ENCODE measurements at regions of chr4 and their contacts with region 1.

Region 1: GRCh38 chr4:142372530-142373260 is 473.4 kb downstream of the INPP4B start:
- DNase-seq: no peak
- ATAC-seq: peak; percentile 6
- H3K4me3 ChIP-seq: no peak overlapping the region
- H3K27ac ChIP-seq: no peak overlapping the region
- H3K4me1 ChIP-seq: no peaks in the 10 kb centered on the region
- H3K27me3 ChIP-seq: no peaks in the 10 kb centered on the region
- CTCF ChIP-seq: no peak
- EP300 ChIP-seq: no peak
- POLR2A ChIP-seq: no peak
- RAD21 ChIP-seq: no peak

Region 2: GRCh38 chr4:142314686-142315085 is 58.0 kb before region 1 on chr4:
- CTCF ChIA-PET with region 1: no interaction called
- POLR2A ChIA-PET with region 1: no interaction called
- RAD21 ChIA-PET with region 1: no interaction called
- SMC1A ChIA-PET with region 1: no interaction called
- in situ Hi-C with region 1: no loop called
- intact Hi-C with region 1: no loop called
- DNase-seq: no peak
- ATAC-seq: no peak
- H3K4me3 ChIP-seq: no peak overlapping the region
- H3K27ac ChIP-seq: no peak overlapping the region
- H3K4me1 ChIP-seq: no peaks in the 10 kb centered on the region
- H3K27me3 ChIP-seq: no peaks in the 10 kb centered on the region
- CTCF ChIP-seq: no peak
- EP300 ChIP-seq: no peak
- POLR2A ChIP-seq: no peak
- RAD21 ChIP-seq: no peak

Region 3: GRCh38 chr4:142347241-142347640 is 25.5 kb before region 1 on chr4:
- CTCF ChIA-PET with region 1: interaction called, 68 read pairs
- POLR2A ChIA-PET with region 1: interaction called, 5 read pairs
- RAD21 ChIA-PET with region 1: interaction called, 18 read pairs
- SMC1A ChIA-PET with region 1: interaction called, 76 read pairs
- in situ Hi-C with region 1: no loop called
- intact Hi-C with region 1: no loop called
- DNase-seq: no peak
- ATAC-seq: no peak
- H3K4me3 ChIP-seq: no peak overlapping the region
- H3K27ac ChIP-seq: no peak overlapping the region
- H3K4me1 ChIP-seq: no peaks in the 10 kb centered on the region
- H3K27me3 ChIP-seq: no peaks in the 10 kb centered on the region
- CTCF ChIP-seq: no peak
- EP300 ChIP-seq: no peak
- POLR2A ChIP-seq: no peak
- RAD21 ChIP-seq: no peak

Region 4: DNA sequence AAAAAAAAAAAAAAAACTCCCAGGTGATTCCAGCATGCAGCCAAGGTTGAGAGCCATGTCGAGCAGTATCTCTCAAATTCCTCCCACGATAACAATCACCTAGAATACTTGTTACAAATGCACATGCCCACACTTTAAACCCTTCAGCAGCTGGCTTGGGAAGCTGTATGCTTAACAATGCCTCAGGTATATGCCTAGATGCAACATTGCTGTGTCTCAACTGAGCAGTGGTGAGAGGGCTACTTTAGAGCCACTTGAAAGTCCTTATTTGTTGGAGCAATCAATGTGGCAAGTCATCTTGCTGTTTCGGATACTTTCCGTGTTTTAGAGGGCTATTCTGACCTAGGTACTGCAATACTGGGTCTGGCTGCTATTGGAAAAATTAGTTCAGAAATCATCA is 14.0 kb before region 1 on chr4:
- CTCF ChIA-PET with region 1: interaction called, 68 read pairs
- POLR2A ChIA-PET with region 1: interaction called, 4 read pairs
- RAD21 ChIA-PET with region 1: interaction called, 18 read pairs
- SMC1A ChIA-PET with region 1: interaction called, 76 read pairs
- in situ Hi-C with region 1: no loop called
- intact Hi-C with region 1: no loop called
- DNase-seq: no peak
- ATAC-seq: peak; percentile 45
- H3K4me3 ChIP-seq: no peak overlapping the region
- H3K27ac ChIP-seq: no peak overlapping the region
- H3K4me1 ChIP-seq: no peaks in the 10 kb centered on the region
- H3K27me3 ChIP-seq: no peaks in the 10 kb centered on the region
- CTCF ChIP-seq: no peak
- EP300 ChIP-seq: no peak
- POLR2A ChIP-seq: no peak
- RAD21 ChIP-seq: no peak

Region 5: GRCh38 chr4:142386449-142386848 is 13.8 kb after region 1 on chr4:
- CTCF ChIA-PET with region 1: interaction called, 16 read pairs
- POLR2A ChIA-PET with region 1: interaction called, 12 read pairs
- RAD21 ChIA-PET with region 1: interaction called, 8 read pairs
- SMC1A ChIA-PET with region 1: interaction called, 41 read pairs
- in situ Hi-C with region 1: no loop called
- intact Hi-C with region 1: no loop called
- DNase-seq: no peak
- ATAC-seq: no peak
- H3K4me3 ChIP-seq: no peak overlapping the region
- H3K27ac ChIP-seq: no peak overlapping the region
- H3K4me1 ChIP-seq: no peaks in the 10 kb centered on the region
- H3K27me3 ChIP-seq: no peaks in the 10 kb centered on the region
- CTCF ChIP-seq: no peak
- EP300 ChIP-seq: no peak
- POLR2A ChIP-seq: no peak
- RAD21 ChIP-seq: no peak

Measured in GM12878 (cell line).